CD8-positive, alpha-beta T cell (primary cell): ENCODE measurements at regions of chr9 and their contacts with region 1.

Region 1: DNA sequence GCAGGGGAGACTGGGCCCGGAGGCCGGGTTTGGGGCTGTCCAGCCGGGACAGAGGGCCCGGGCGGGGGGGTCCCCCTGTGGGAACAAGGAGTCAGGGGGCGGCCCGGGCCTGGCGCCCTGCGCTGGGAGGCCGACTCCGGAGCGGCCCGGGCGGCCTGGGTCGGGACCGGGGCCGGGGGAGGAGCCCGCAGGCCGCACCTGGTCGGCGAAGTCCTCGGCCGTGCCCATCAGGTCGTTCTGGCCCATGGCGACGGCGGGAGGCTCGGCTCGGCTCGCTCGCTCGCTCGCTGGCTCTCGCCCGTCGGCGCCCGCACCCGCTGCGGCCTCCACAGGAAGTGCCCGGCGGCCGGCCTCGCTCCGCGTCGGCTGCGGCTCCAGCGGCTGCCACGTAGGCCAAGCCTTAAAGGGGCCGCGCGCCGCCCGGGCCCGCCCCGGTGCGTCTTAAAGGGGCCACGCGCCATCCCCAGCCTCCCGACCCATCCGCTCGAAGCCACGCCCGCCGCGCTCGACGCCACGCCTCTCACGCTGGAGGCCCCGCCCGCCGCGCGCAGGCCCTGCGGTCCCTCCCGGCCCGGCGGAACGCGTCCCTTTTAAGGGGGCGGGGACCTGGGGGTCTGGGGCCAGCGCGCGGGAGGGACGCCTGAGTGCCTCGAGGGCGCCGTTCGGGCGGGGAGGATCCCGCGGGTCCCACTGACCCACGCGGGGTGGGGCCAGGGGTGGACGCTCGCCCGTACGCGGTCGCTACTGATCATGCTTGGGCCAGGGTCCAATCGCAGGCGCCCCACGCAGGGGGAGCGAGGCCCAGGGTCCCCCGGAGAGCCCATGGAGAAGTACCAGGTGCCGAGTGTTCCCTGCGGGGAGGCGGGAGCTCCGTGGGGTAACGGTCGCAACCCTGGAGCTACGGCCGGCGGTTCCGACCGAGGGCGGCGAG is at the starts of genes STKLD1 and SURF4:
- DNase-seq: peak; percentile 88 to 97 (median 94)
- ATAC-seq: peak; percentile 74
- H3K4me3 ChIP-seq: peak within 1 kb of the TSS; percentile 67 to 76
- H3K4me3 Mint-ChIP-seq: peak within 1 kb of the TSS; percentile 92
- H3K27ac ChIP-seq: peak within 1 kb of the TSS; percentile 78 to 91
- H3K27ac Mint-ChIP-seq: peak within 1 kb of the TSS; percentile 95
- H3K4me1 ChIP-seq: peaks cover 40% of the 10 kb centered on the region
- H3K4me1 Mint-ChIP-seq: peaks cover 39% of the 10 kb centered on the region
- H3K27me3 ChIP-seq: no peaks in the 10 kb centered on the region
- H3K27me3 Mint-ChIP-seq: no peaks in the 10 kb centered on the region
- CTCF ChIP-seq: no peak
- total RNA-seq, gene STKLD1: 0.92 to 1.8 TPM
- total RNA-seq, gene SURF4: 228 TPM

Region 2: GRCh38 chr9:133184962-133185361 is 191.0 kb before region 1 on chr9:
- CTCF ChIA-PET with region 1: interaction called, 12 read pairs
- POLR2A ChIA-PET with region 1: no interaction called
- intact Hi-C with region 1: loop called in 1 of 2 experiments (anchors 1 kb)
- DNase-seq: peak in 6 of 9 experiments; percentile 17 to 80 (median 35)
- ATAC-seq: peak; percentile 49
- H3K4me3 ChIP-seq: no peak overlapping the region
- H3K4me3 Mint-ChIP-seq: no peak overlapping the region
- H3K27ac ChIP-seq: no peak overlapping the region
- H3K27ac Mint-ChIP-seq: no peak overlapping the region
- H3K4me1 ChIP-seq: peaks cover 8% of the 10 kb centered on the region
- H3K4me1 Mint-ChIP-seq: peaks cover 13% of the 10 kb centered on the region
- H3K27me3 ChIP-seq: peaks cover 3% of the 10 kb centered on the region in 2 experiments
- H3K27me3 Mint-ChIP-seq: peaks cover 31% of the 10 kb centered on the region
- CTCF ChIP-seq: peak; percentile 46

Region 3: GRCh38 chr9:133342570-133342969 is 33.4 kb before region 1 on chr9:
- CTCF ChIA-PET with region 1: interaction called, 25 read pairs
- POLR2A ChIA-PET with region 1: interaction called, 22 read pairs
- intact Hi-C with region 1: no loop called
- DNase-seq: no peak
- ATAC-seq: no peak
- H3K4me3 ChIP-seq: no peak overlapping the region
- H3K4me3 Mint-ChIP-seq: no peak overlapping the region
- H3K27ac ChIP-seq: no peak overlapping the region
- H3K27ac Mint-ChIP-seq: no peak overlapping the region
- H3K4me1 ChIP-seq: peaks cover 27% of the 10 kb centered on the region
- H3K4me1 Mint-ChIP-seq: peaks cover 37% of the 10 kb centered on the region
- H3K27me3 ChIP-seq: no peaks in the 10 kb centered on the region
- H3K27me3 Mint-ChIP-seq: no peaks in the 10 kb centered on the region
- CTCF ChIP-seq: no peak

Region 4: DNA sequence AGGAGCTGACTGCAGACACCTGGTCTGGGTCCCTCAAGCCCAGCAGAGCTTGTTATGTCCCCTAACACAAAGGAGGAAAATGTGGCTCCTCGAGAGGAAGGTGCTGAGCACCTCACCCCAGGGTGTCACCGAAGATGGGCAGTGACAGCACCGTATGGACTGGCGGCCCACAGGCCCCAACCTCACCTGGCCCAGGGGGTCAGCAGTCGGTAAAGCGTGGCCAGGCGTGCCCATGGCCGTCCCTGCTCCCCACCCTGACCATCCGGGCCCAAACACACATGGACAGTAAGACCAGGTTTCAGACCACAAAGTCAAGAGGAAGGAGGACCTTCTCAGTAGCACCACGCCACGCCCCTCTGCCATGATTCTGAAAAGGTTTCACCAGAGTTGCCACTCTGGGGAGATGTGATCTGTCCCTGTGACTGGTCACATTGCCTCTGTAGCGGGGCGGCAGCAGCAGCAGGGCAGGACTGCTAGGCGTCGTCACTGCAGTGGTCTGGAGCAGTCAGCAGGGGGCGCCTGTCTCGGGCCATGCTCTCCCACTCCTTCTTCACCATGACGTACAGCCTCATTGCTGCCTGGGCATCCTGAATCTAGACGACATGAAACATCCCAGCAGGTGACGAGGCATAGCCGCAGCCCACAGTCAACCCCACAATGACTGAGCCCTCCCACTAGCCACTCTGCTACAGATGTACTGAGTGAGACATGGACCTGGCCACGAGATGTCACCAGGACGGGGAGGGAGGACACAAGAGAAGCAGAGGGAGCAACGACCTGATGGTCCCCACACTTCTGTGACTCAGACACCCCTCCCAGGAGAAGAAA is 30.7 kb after region 1 on chr9:
- CTCF ChIA-PET with region 1: interaction called, 3 read pairs
- POLR2A ChIA-PET with region 1: no interaction called
- intact Hi-C with region 1: loop called in 1 of 2 experiments (anchors 5 kb)
- DNase-seq: peak; percentile 62 to 87 (median 83)
- ATAC-seq: peak; percentile 91
- H3K4me3 ChIP-seq: no peak overlapping the region
- H3K4me3 Mint-ChIP-seq: no peak overlapping the region
- H3K27ac ChIP-seq: peak overlapping the region in 1 of 2 experiments; percentile 58
- H3K27ac Mint-ChIP-seq: peak overlapping the region; percentile 64
- H3K4me1 ChIP-seq: peaks cover 3% of the 10 kb centered on the region
- H3K4me1 Mint-ChIP-seq: peaks cover 11% of the 10 kb centered on the region
- H3K27me3 ChIP-seq: no peaks in the 10 kb centered on the region
- H3K27me3 Mint-ChIP-seq: no peaks in the 10 kb centered on the region
- CTCF ChIP-seq: peak; percentile 89

Region 5: DNA sequence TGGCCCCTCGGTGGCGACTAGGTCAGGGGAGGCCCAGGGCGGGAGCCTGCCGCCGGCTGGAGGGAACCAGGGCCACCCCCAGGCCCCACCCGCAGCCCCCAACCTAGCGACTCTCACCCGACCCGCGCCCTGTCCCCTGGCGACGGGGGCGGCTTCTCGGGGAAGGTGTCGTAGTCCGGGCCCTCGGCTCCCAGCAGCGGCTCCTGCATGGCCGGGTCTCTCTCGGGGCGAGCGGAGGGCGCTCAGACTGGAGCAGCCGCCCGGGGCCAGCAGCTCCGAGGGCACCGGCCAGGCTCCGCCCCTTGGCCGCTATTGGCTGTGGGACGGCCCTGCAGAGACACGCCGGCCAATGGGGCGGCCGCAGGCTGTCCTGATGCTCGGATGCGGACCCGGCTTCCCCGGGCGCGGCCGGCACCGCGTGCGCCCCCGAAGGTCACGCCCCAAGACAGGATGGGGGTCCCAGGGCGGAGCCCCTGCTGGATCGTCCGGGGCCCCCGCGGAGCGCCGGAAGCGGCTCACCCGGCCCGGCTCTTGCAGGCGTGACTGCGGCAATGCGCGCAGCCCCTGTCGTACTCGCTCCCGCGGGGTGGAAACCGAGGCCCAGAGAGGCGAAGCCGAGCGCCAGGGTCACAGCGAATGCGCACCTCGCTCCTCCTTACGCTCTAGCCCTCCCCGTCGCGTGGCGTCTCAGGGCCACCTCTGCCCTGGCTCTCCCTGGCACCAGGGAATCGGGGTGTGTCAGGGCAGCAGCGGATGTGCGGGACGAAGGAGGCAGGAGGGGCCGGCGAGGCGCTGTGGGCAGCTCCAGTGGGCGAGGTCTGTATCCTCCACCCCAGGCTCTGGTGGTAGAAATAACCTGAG is 103.1 kb after region 1 on chr9 and contains the start of gene SLC2A6:
- CTCF ChIA-PET with region 1: no interaction called
- POLR2A ChIA-PET with region 1: interaction called, 3 read pairs
- intact Hi-C with region 1: loop called in 1 of 2 experiments (anchors 2 kb)
- DNase-seq: peak; percentile 58 to 92 (median 81)
- ATAC-seq: peak; percentile 96
- H3K4me3 ChIP-seq: peak within 1 kb of the TSS; percentile 62 to 65
- H3K4me3 Mint-ChIP-seq: peak within 1 kb of the TSS; percentile 75
- H3K27ac ChIP-seq: peak within 1 kb of the TSS; percentile 56 to 59
- H3K27ac Mint-ChIP-seq: peak within 1 kb of the TSS; percentile 72
- H3K4me1 ChIP-seq: peaks cover 15% of the 10 kb centered on the region
- H3K4me1 Mint-ChIP-seq: peaks cover 10% of the 10 kb centered on the region
- H3K27me3 ChIP-seq: no peaks in the 10 kb centered on the region
- H3K27me3 Mint-ChIP-seq: no peaks in the 10 kb centered on the region
- CTCF ChIP-seq: no peak
- total RNA-seq, gene SLC2A6: 8.0 to 9.7 TPM

Region 6: DNA sequence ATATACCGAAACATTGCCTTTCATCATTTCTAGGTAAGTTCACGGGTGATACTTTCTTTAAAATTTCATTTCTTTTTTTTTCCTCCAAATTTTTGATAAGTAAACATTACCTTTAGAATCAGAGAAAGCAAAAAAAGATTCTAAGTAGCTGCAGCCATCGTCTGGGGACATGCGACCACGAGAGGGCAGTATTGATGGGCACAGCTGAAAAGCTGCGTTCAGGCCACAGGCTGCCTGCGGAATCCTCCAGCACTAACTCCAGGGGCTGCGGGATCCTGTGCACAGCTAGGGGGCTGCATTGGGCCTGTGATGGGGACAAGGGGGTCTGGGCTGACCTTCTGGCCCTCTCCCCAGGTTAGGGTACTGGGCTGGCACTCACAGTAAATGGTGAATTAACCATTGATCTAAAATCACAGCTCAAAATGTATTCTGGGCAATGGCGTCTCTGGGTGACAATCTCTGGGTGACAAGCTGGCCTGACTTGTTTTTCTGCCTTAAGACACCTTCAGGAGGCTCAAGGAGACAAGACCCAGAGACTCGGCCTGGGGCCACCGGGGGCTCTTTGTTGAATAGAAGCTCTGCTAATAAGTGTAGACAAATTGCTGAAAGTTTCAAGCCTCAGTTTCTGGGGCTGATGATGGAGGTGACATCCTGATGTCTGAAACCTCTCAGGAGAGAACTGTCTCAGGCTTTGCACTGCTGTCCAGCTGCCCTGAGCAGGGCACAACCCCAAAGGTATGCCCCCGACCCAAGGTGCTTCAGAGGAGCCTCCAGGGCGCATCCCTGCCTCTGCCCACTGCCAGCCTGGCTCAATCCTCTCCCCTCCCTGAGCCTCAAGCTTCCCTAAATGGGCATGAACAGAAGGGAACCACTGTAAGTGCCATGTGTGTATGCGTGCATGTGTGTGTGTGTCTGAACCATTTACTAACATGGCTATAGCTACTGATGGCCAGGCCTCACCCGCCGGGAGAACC is 406.5 kb after region 1 on chr9:
- CTCF ChIA-PET with region 1: no interaction called
- POLR2A ChIA-PET with region 1: no interaction called
- intact Hi-C with region 1: no loop called
- DNase-seq: peak; percentile 44 to 77 (median 67)
- ATAC-seq: peak; percentile 57
- H3K4me3 ChIP-seq: no peak overlapping the region
- H3K4me3 Mint-ChIP-seq: no peak overlapping the region
- H3K27ac ChIP-seq: no peak overlapping the region
- H3K27ac Mint-ChIP-seq: no peak overlapping the region
- H3K4me1 ChIP-seq: no peaks in the 10 kb centered on the region
- H3K4me1 Mint-ChIP-seq: no peaks in the 10 kb centered on the region
- H3K27me3 ChIP-seq: no peaks in the 10 kb centered on the region
- H3K27me3 Mint-ChIP-seq: no peaks in the 10 kb centered on the region
- CTCF ChIP-seq: peak; percentile 64